Ovary (tissue), 10 donors: ENCODE measurements at regions of chr5 and their contacts with region 1.

Region 1: GRCh38 chr5:5141625-5142532 is 1.7 kb downstream of the ADAMTS16 start:
- DNase-seq: peak in 4 of 5 donors; percentile 47 to 74 (median 62)
- H3K4me3 ChIP-seq: no peak overlapping the region
- H3K27ac ChIP-seq: no peak overlapping the region
- H3K4me1 ChIP-seq: peaks cover 6% of the 10 kb centered on the region
- H3K27me3 ChIP-seq: no peaks in the 10 kb centered on the region
- CTCF ChIP-seq: peak; percentile 57 to 81 (median 75)
- EP300 ChIP-seq: no peak
- POLR2A ChIP-seq: no peak

Region 2: GRCh38 chr5:4847766-4848165 is 294.1 kb before region 1 on chr5:
- intact Hi-C with region 1: no loop called
- DNase-seq: no peak
- H3K4me3 ChIP-seq: no peak overlapping the region
- H3K27ac ChIP-seq: no peak overlapping the region
- H3K4me1 ChIP-seq: no peaks in the 10 kb centered on the region
- H3K27me3 ChIP-seq: no peaks in the 10 kb centered on the region
- CTCF ChIP-seq: no peak
- EP300 ChIP-seq: no peak
- POLR2A ChIP-seq: no peak

Region 3: GRCh38 chr5:5421961-5422818 is 280.3 kb after region 1 on chr5 and contains the start of gene ICE1:
- intact Hi-C with region 1: loop called in 3 of 4 experiments (anchors 5 kb)
- DNase-seq: peak; percentile 97 to 98 (median 97)
- H3K4me3 ChIP-seq: peak within 1 kb of the TSS; percentile 75
- H3K27ac ChIP-seq: peak within 1 kb of the TSS; percentile 99 to 100
- H3K4me1 ChIP-seq: peaks cover 17% of the 10 kb centered on the region
- H3K27me3 ChIP-seq: no peaks in the 10 kb centered on the region
- CTCF ChIP-seq: peak in 1 of 3 donors; percentile 4
- EP300 ChIP-seq: peak; percentile 31
- POLR2A ChIP-seq: peak; percentile 76
- total RNA-seq, gene ICE1: 22.7 to 38.0 (median 30.7) TPM

Region 4: DNA sequence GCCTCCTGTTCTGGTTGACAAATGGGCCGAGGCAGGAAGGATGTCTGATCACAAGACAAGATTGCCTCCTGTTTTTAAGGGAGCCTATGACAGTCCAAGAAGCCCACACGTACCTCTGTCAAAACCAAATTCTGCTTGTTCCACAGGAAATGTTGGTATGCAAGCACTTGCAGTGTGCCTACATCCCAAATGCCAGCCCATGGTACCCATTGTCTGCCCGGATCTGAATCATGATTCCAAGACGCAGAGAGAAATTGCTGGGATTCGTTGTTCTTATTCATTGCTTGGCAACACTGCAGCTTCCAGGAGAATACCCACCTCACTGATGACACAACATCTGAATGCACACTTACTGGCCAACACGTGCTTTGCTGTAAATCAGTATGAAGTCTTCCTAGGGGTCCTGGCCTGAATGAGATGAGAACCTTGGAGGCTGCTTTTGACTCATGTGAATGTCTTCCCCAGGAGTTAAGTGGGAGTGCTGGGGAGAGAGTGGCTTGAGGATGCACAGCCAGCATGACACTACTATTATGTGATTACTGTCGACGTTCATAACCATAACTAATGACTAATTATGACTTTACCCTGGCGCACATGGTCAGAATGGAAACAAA is 1502.9 kb after region 1 on chr5:
- intact Hi-C with region 1: loop called in 1 of 4 experiments (anchors 5 kb)
- DNase-seq: no peak
- H3K4me3 ChIP-seq: no peak overlapping the region
- H3K27ac ChIP-seq: no peak overlapping the region
- H3K4me1 ChIP-seq: no peaks in the 10 kb centered on the region
- H3K27me3 ChIP-seq: no peaks in the 10 kb centered on the region
- CTCF ChIP-seq: no peak
- EP300 ChIP-seq: no peak
- POLR2A ChIP-seq: no peak